CD8-positive, alpha-beta T cell (primary cell): ENCODE measurements at regions of chr21 and their contacts with region 1.

Region 1: DNA sequence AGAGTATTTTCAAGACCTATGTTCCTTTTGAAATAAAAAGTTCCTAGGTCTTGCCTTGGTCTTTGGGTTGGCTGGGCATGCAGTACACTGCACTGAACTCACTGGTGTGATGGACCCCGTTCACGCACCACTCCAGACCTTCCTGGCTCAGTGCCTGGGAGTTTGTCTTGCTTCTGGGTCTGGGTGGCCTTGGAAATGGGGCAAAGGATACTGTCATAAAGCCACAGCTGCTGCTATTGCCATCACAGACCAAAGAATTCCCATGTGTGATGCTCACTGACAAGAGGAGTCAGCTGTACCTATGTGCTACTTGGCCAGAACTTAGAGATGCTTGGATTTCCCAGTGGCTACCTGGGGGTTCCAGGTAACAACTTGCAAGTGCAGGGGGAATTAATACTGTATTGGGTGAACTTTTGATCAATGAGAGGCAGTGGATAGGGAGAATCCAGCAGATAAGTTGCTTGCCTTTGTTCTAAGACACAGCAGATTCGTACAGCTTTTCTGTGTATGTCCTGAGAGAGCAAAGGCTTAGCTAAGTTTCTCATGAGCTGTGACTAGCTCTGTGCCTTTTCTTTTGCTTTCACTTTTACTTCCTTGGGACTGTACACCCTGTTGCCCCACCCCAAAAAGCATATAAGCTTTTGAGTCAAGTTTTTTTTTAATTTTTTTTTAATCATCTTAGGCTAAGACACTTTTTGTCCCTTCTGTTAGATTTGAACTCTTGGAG is 115.3 kb downstream of the RUNX1 start:
- DNase-seq: peak in 4 of 9 experiments; percentile 10 to 87 (median 64)
- ATAC-seq: peak; percentile 88
- H3K4me3 ChIP-seq: peak overlapping the region; percentile 7 to 29
- H3K4me3 Mint-ChIP-seq: peak overlapping the region; percentile 80
- H3K27ac ChIP-seq: peak overlapping the region; percentile 39 to 90
- H3K27ac Mint-ChIP-seq: peak overlapping the region; percentile 99
- H3K4me1 ChIP-seq: peaks cover 60% of the 10 kb centered on the region
- H3K4me1 Mint-ChIP-seq: peaks cover 83% of the 10 kb centered on the region
- H3K27me3 ChIP-seq: no peaks in the 10 kb centered on the region
- H3K27me3 Mint-ChIP-seq: no peaks in the 10 kb centered on the region
- CTCF ChIP-seq: no peak

Region 2: DNA sequence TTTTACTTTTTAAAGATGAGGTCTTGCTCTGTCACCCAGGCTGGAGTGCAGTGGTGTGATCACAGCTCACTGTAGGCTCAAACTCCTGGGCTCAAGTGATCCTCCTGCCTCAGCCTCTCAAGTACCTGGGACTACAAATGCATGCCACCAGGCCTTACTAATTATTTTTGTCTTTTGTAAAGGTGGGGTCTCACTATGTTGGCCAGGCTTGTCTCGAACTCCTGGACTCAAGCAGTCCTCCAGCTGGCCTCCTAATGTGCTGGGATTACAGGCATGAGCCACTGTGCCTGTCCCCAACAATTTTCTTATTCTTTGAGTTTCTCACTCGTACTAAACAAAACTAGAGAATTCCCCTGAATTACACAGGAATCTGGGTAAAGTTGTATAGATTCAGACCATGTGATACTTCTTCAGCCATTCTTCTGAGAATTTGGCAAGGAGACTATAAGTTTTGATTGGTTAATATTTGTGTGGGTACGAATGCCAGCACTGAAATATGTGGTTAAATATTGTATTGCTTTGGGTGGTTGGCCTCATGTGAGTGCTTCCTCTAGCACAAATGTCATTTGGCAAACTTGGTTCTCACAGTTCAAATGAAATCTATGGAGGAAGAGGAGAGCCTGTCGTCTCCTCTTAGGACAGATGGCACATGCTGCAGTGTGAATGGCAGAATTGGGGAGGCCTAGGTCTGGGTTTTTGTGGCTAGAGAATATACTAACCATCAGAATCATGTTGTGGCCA is 10.4 kb after region 1 on chr21:
- CTCF ChIA-PET with region 1: interaction called, 4 read pairs
- POLR2A ChIA-PET with region 1: interaction called, 3 read pairs
- intact Hi-C with region 1: loop called in 1 of 2 experiments (anchors 1 kb)
- DNase-seq: no peak
- ATAC-seq: no peak
- H3K4me3 ChIP-seq: no peak overlapping the region
- H3K4me3 Mint-ChIP-seq: no peak overlapping the region
- H3K27ac ChIP-seq: no peak overlapping the region
- H3K27ac Mint-ChIP-seq: peak overlapping the region; percentile 11
- H3K4me1 ChIP-seq: peaks cover 32% of the 10 kb centered on the region
- H3K4me1 Mint-ChIP-seq: peaks cover 92% of the 10 kb centered on the region
- H3K27me3 ChIP-seq: no peaks in the 10 kb centered on the region
- H3K27me3 Mint-ChIP-seq: no peaks in the 10 kb centered on the region
- CTCF ChIP-seq: no peak

Region 3: GRCh38 chr21:34974162-34974981 is 40.6 kb after region 1 on chr21:
- CTCF ChIA-PET with region 1: no interaction called
- POLR2A ChIA-PET with region 1: no interaction called
- intact Hi-C with region 1: loop called in 1 of 2 experiments (anchors 5 kb)
- DNase-seq: peak in 8 of 9 experiments; percentile 30 to 86 (median 54)
- ATAC-seq: peak; percentile 84
- H3K4me3 ChIP-seq: peak overlapping the region; percentile 19 to 22
- H3K4me3 Mint-ChIP-seq: peak overlapping the region; percentile 78
- H3K27ac ChIP-seq: peak overlapping the region; percentile 8 to 36
- H3K27ac Mint-ChIP-seq: peak overlapping the region; percentile 89
- H3K4me1 ChIP-seq: peaks cover 59% of the 10 kb centered on the region
- H3K4me1 Mint-ChIP-seq: peaks cover 85% of the 10 kb centered on the region
- H3K27me3 ChIP-seq: no peaks in the 10 kb centered on the region
- H3K27me3 Mint-ChIP-seq: no peaks in the 10 kb centered on the region
- CTCF ChIP-seq: no peak

Region 4: GRCh38 chr21:35020902-35021301 is 87.1 kb after region 1 on chr21:
- CTCF ChIA-PET with region 1: interaction called, 4 read pairs
- POLR2A ChIA-PET with region 1: interaction called, 5 read pairs
- intact Hi-C with region 1: loop called (anchors 5 kb)
- DNase-seq: no peak
- ATAC-seq: no peak
- H3K4me3 ChIP-seq: no peak overlapping the region
- H3K4me3 Mint-ChIP-seq: no peak overlapping the region
- H3K27ac ChIP-seq: peak overlapping the region in 1 of 2 experiments; percentile 46
- H3K27ac Mint-ChIP-seq: peak overlapping the region; percentile 75
- H3K4me1 ChIP-seq: peaks cover 71% of the 10 kb centered on the region
- H3K4me1 Mint-ChIP-seq: peaks cover 92% of the 10 kb centered on the region
- H3K27me3 ChIP-seq: no peaks in the 10 kb centered on the region
- H3K27me3 Mint-ChIP-seq: no peaks in the 10 kb centered on the region
- CTCF ChIP-seq: no peak

Region 5: DNA sequence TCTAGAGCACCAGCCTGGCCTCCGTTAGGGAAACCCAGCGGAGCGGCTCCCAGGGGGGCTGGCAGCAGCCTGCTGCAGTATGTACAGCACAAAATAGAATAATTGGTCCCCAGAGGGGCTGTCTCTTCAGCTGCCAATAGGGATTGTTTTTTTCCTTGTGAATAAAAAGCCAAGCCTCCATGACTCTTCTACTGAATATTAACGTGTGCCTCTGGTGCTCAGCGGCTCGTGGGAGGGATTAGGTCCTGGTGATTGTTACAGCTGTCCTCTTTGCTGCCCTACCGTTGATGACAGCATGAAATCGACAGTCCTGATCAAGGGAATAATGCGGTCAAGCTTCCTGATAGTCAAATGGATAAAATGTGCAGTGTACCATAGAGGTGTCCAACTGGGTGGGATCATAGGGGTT is 306.0 kb after region 1 on chr21:
- CTCF ChIA-PET with region 1: no interaction called
- POLR2A ChIA-PET with region 1: no interaction called
- intact Hi-C with region 1: no loop called
- DNase-seq: no peak
- ATAC-seq: no peak
- H3K4me3 ChIP-seq: no peak overlapping the region
- H3K4me3 Mint-ChIP-seq: no peak overlapping the region
- H3K27ac ChIP-seq: no peak overlapping the region
- H3K27ac Mint-ChIP-seq: no peak overlapping the region
- H3K4me1 ChIP-seq: peaks cover 23% of the 10 kb centered on the region
- H3K4me1 Mint-ChIP-seq: peaks cover 32% of the 10 kb centered on the region
- H3K27me3 ChIP-seq: no peaks in the 10 kb centered on the region
- H3K27me3 Mint-ChIP-seq: no peaks in the 10 kb centered on the region
- CTCF ChIP-seq: no peak